ENCODE measurements at regions of chrX and their contacts with region 1.

Region 1: DNA sequence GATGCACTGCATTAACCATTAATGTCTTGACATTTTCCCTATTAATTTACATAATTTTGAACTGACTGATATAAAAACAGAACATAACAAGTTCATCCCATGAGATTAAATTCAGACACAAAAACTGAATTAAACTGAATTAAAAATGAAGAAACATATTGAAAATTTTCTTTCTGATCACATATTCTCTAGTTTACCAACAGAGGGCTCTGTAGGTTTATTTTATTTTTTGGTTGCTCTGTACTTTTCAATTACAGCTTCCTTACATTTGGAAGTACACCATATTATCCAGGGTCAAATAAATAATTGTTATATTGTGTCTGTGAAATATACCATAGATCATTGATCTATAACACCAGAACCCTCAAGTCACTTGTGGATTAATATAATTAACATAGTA is 27.3 kb upstream of the CT83 start:
- DNase-seq: no peak
- ATAC-seq: no peak
- H3K4me3 ChIP-seq: no peak overlapping the region
- H3K27ac ChIP-seq: no peak overlapping the region
- H3K4me1 ChIP-seq: no peaks in the 10 kb centered on the region
- H3K27me3 ChIP-seq: no peaks in the 10 kb centered on the region
- CTCF ChIP-seq: peak; percentile 30; the same call in 1 of the 2 replicates

Region 2: DNA sequence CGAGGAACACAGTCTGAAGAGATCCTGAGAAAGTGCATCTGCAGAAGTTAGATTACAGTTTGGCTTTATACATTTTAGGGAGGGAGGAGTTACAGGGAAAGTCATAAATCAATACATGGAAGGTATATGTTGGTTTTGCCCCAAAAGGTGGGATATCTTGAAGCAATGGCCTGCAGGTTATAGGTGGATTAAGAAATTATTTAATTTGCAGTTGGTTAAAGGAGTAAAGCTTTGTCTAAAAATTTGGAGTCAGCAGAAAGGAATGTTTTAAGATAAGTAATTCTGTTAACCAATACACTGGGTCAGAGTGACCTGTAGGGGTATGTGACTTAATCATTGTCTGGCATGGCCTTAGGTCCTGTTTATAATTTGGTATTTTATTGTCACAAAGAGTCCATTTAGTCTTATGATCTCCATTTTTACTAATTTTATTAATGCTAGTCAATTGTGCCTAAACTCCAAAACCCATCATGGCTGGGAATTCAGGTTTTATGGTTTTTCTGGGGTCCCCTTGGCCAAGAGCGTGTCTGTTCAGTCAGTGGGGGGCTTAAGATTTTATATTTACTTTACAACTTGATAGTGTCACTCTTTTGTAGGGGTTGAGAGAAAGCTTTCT is 204.5 kb before region 1 on chrX:
- CTCF ChIA-PET with region 1: no interaction called
- POLR2A ChIA-PET with region 1: interaction called, 18 read pairs
- in situ Hi-C with region 1: no loop called
- intact Hi-C with region 1: no loop called
- DNase-seq: no peak
- ATAC-seq: no peak
- H3K4me3 ChIP-seq: no peak overlapping the region
- H3K27ac ChIP-seq: no peak overlapping the region
- H3K4me1 ChIP-seq: no peaks in the 10 kb centered on the region
- H3K27me3 ChIP-seq: no peaks in the 10 kb centered on the region
- CTCF ChIP-seq: no peak

Region 3: GRCh38 chrX:117985241-117985640 is 1495.1 kb after region 1 on chrX:
- CTCF ChIA-PET with region 1: no interaction called
- POLR2A ChIA-PET with region 1: no interaction called
- in situ Hi-C with region 1: no loop called
- intact Hi-C with region 1: loop called (anchors 10 kb)
- DNase-seq: no peak
- ATAC-seq: no peak
- H3K4me3 ChIP-seq: no peak overlapping the region
- H3K27ac ChIP-seq: no peak overlapping the region
- H3K4me1 ChIP-seq: no peaks in the 10 kb centered on the region
- H3K27me3 ChIP-seq: no peaks in the 10 kb centered on the region
- CTCF ChIP-seq: peak; percentile 44; the same call in 1 of the 2 replicates

Measured in Panc1 (cell line).